Activated CD4-positive, alpha-beta memory T cell treated with anti-CD3 and anti-CD28 coated beads for 36 hours (primary cell): ENCODE measurements at regions of chr3 and their contacts with region 1.

Region 1: GRCh38 chr3:31132132-31132769 is 237.8 kb upstream of the GADL1 start:
- DNase-seq: no peak
- H3K4me3 Mint-ChIP-seq: no peak overlapping the region
- H3K27ac Mint-ChIP-seq: no peak overlapping the region
- H3K4me1 Mint-ChIP-seq: peaks cover 4% of the 10 kb centered on the region
- H3K27me3 Mint-ChIP-seq: no peaks in the 10 kb centered on the region

Region 2: DNA sequence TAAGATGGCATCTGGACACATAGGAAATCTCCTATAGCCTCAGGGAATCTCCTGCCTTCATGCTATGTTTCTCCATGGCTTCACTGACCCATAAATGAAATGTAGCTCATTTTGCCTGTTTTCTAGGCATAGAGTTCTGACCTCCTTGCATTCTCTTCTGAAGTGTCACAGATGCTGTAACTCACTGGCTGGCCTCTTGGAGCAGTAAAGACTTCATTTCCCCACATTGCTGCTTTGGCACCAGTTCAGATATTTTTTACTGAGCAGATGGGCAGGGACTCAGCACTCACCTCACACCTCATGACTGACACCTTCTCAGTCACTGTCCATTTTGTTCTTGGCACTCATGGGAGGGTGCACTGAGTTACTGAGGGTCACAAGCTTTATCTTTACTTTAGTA is 812.5 kb before region 1 on chr3:
- CTCF ChIA-PET with region 1: no interaction called
- POLR2A ChIA-PET with region 1: no interaction called
- intact Hi-C with region 1: no loop called
- DNase-seq: peak; percentile 44
- H3K4me3 Mint-ChIP-seq: no peak overlapping the region
- H3K27ac Mint-ChIP-seq: no peak overlapping the region
- H3K4me1 Mint-ChIP-seq: peaks cover 4% of the 10 kb centered on the region
- H3K27me3 Mint-ChIP-seq: no peaks in the 10 kb centered on the region

Region 3: DNA sequence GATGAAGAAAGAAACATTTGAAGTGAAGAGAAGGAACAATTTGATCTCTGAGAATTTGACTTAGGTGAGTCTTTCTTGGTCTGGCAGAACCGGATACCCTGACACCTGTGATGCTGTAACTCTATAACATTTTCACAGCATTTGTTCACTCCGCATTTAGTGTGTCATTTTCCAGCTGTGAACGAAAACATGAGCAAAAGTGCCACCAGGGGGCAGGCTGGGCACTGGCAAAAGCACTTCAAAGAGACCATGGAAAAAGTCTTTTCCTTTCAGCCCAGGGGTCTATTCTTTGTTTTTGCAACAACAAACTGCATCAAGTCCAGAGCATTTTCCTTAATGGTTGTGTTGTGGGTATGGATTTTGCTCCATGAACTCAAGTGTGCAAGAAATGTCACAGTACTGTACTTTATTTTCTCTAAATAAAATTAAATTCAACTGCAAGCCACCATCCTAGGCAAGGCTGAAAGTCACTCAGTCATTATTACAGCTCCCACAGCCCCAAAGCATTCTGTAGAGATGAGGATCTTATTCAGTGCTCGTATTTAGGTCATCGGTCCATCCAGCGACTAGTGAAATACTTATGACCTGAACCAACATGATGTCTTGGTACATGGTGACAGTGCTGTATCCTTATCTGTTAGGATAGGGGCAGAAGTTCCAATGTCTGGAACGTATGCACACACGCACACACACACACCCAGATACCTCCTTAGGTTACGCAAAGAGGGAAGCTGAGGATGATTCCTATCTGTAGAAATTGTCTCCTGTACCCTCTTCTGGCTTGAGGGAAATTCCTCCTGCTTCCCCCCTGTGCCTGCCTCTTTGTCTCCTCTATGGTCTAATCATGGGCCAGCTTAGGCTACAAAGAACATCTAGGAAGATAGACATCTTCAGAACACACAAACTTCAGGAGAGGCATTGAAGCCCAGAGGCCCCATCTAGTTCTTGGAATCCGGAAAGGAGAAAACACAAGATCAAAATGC is 363.3 kb before region 1 on chr3:
- CTCF ChIA-PET with region 1: interaction called, 72 read pairs
- POLR2A ChIA-PET with region 1: no interaction called
- intact Hi-C with region 1: loop called (anchors 1 kb)
- DNase-seq: peak; percentile 81
- H3K4me3 Mint-ChIP-seq: no peak overlapping the region
- H3K27ac Mint-ChIP-seq: no peak overlapping the region
- H3K4me1 Mint-ChIP-seq: no peaks in the 10 kb centered on the region
- H3K27me3 Mint-ChIP-seq: peaks cover 7% of the 10 kb centered on the region

Region 4: GRCh38 chr3:30779686-30780287 is 352.5 kb before region 1 on chr3:
- CTCF ChIA-PET with region 1: interaction called, 10 read pairs
- POLR2A ChIA-PET with region 1: no interaction called
- intact Hi-C with region 1: no loop called
- DNase-seq: no peak
- H3K4me3 Mint-ChIP-seq: no peak overlapping the region
- H3K27ac Mint-ChIP-seq: no peak overlapping the region
- H3K4me1 Mint-ChIP-seq: no peaks in the 10 kb centered on the region
- H3K27me3 Mint-ChIP-seq: peaks cover 3% of the 10 kb centered on the region

Region 5: GRCh38 chr3:30964612-30965011 is 167.6 kb before region 1 on chr3:
- CTCF ChIA-PET with region 1: interaction called, 7 read pairs
- POLR2A ChIA-PET with region 1: no interaction called
- intact Hi-C with region 1: loop called (anchors 5 kb)
- DNase-seq: peak; percentile 23
- H3K4me3 Mint-ChIP-seq: no peak overlapping the region
- H3K27ac Mint-ChIP-seq: no peak overlapping the region
- H3K4me1 Mint-ChIP-seq: peaks cover 2% of the 10 kb centered on the region
- H3K27me3 Mint-ChIP-seq: peaks cover 6% of the 10 kb centered on the region

Region 6: DNA sequence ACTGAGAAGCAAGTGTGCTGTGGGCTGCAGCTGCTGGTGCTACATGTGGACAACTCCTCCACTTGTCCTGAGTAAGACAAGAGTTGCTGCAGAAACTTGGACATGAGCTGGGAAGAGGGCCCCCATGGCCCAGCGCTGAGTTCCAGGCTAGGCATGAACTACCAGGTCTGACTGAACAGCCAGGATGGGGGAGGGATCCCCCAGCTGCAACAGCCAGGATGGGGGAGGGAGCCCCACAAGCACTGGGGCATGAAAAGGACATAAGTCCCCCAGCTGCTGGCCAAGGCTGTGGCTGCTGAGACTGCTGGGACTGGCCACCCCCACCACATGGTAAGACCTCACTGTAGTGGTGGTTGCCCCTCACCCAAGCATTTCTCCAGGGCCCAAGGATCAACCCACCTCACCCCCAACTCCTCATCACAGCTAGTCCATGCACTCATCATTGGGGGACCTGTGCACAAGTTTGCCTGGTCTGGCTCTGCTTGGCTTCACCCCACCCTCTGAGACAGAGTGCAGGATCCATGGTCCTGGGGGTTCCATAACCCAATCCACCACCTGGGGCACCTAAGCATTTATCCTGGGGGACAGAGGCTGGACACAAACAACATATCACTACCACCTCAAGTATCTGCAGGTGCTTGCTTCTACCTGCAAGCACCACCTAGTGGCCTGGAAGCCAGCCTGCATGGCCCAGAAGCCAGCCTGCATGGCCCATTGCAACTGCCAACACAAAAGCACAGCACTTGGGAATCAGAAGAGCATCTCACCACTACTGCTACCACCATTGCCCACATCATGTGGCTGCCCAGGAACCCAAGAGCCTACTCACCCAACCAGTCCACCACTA is 316.0 kb after region 1 on chr3:
- CTCF ChIA-PET with region 1: no interaction called
- POLR2A ChIA-PET with region 1: no interaction called
- intact Hi-C with region 1: loop called (anchors 5 kb)
- DNase-seq: peak; percentile 55
- H3K4me3 Mint-ChIP-seq: no peak overlapping the region
- H3K27ac Mint-ChIP-seq: peak overlapping the region; percentile 23
- H3K4me1 Mint-ChIP-seq: peaks cover 21% of the 10 kb centered on the region
- H3K27me3 Mint-ChIP-seq: no peaks in the 10 kb centered on the region